SK-N-SH (cell line): ENCODE measurements at regions of chr1 and their contacts with region 1.

Region 1: GRCh38 chr1:204162231-204163074 is 3.7 kb downstream of the REN start:
- DNase-seq: peak; percentile 91
- H3K4me3 ChIP-seq: peak overlapping the region in 1 of 2 experiments; percentile 20; a peak in 1 of 4 replicates
- H3K27ac ChIP-seq: no peak overlapping the region
- H3K4me1 ChIP-seq: no peaks in the 10 kb centered on the region; a peak in 1 of 4 replicates
- H3K27me3 ChIP-seq: no peaks in the 10 kb centered on the region; the same call in 1 of the 2 replicates
- CTCF ChIP-seq: peak; percentile 98
- EP300 ChIP-seq: no peak
- RAD21 ChIP-seq: peak; percentile 99

Region 2: GRCh38 chr1:204065174-204065985 is 97.1 kb before region 1 on chr1:
- CTCF ChIA-PET with region 1: no interaction called
- POLR2A ChIA-PET with region 1: no interaction called
- DNase-seq: no peak
- H3K4me3 ChIP-seq: no peak overlapping the region
- H3K27ac ChIP-seq: no peak overlapping the region
- H3K4me1 ChIP-seq: 0 out of 4 replicates have a peak, but pooled peaks cover 0 to 5% of the 10 kb centered on the region in 2 experiments
- H3K27me3 ChIP-seq: no peaks in the 10 kb centered on the region
- CTCF ChIP-seq: no peak
- EP300 ChIP-seq: no peak
- RAD21 ChIP-seq: no peak

Region 3: GRCh38 chr1:204136814-204137213 is 25.6 kb before region 1 on chr1:
- CTCF ChIA-PET with region 1: interaction called, 24 read pairs
- POLR2A ChIA-PET with region 1: no interaction called
- DNase-seq: no peak
- H3K4me3 ChIP-seq: no peak overlapping the region
- H3K27ac ChIP-seq: no peak overlapping the region
- H3K4me1 ChIP-seq: peaks cover 3% of the 10 kb centered on the region in 2 experiments; a peak in 3 of 4 replicates
- H3K27me3 ChIP-seq: no peaks in the 10 kb centered on the region
- CTCF ChIP-seq: no peak
- EP300 ChIP-seq: no peak
- RAD21 ChIP-seq: no peak

Region 4: GRCh38 chr1:204198151-204198994 is 35.9 kb after region 1 on chr1:
- CTCF ChIA-PET with region 1: interaction called, 157 read pairs
- POLR2A ChIA-PET with region 1: no interaction called
- DNase-seq: peak; percentile 45
- H3K4me3 ChIP-seq: no peak overlapping the region
- H3K27ac ChIP-seq: no peak overlapping the region
- H3K4me1 ChIP-seq: peaks cover 2 to 26% of the 10 kb centered on the region in 2 experiments; a peak in 2 of 4 replicates
- H3K27me3 ChIP-seq: no peaks in the 10 kb centered on the region
- CTCF ChIP-seq: no peak; the same call in 1 of the 2 replicates
- EP300 ChIP-seq: 0 out of 4 replicates have a peak, but pooled peaks of 1 of the 2 experiments have one; percentile 37
- RAD21 ChIP-seq: no peak

Region 5: DNA sequence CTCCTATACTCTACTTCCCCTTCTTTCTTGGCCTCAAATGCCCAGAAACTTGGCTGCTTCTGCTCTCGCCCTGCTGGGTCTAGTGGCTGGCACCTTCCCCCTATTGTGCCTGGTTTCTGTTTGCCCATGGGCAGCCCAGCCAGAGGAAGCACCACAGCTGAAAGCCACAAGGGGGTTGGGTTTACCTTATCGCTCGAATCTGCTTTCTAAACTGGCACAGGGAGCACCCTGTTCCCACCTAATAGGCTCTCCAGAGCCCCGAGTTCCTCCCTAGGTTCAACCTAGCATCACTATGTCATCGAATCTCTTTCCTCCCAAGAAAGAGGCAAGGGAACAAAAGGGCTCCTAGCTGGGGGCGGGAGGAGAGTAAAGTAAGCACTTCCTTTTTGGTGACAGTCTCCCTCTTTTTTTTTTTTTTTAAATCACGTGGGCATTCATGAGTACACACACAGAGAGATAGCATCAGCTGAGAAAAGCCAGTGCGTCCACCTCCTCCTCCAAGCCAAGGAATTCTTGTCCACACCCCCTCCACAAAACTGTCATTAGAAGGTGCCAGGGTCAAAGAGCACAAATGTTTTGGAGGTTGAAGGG is 124.5 kb after region 1 on chr1:
- CTCF ChIA-PET with region 1: interaction called, 13 read pairs
- POLR2A ChIA-PET with region 1: interaction called, 4 read pairs
- DNase-seq: peak; percentile 51
- H3K4me3 ChIP-seq: peak overlapping the region in 1 of 2 experiments; percentile 54; a peak in 2 of 4 replicates
- H3K27ac ChIP-seq: peak overlapping the region in 1 of 2 experiments; percentile 98; a peak in 2 of 4 replicates
- H3K4me1 ChIP-seq: peaks cover 0 to 54% of the 10 kb centered on the region in 2 experiments; a peak in 2 of 4 replicates
- H3K27me3 ChIP-seq: peaks cover 21% of the 10 kb centered on the region
- CTCF ChIP-seq: no peak
- EP300 ChIP-seq: peak in 1 of 2 experiments; percentile 56; a peak in 1 of 4 replicates
- RAD21 ChIP-seq: no peak

Region 6: GRCh38 chr1:204384994-204385352 is 222.5 kb after region 1 on chr1:
- CTCF ChIA-PET with region 1: interaction called, 15 read pairs
- POLR2A ChIA-PET with region 1: no interaction called
- DNase-seq: peak; percentile 48
- H3K4me3 ChIP-seq: no peak overlapping the region
- H3K27ac ChIP-seq: no peak overlapping the region; a peak in 1 of 4 replicates
- H3K4me1 ChIP-seq: peaks cover 3 to 9% of the 10 kb centered on the region in 2 experiments; a peak in 1 of 4 replicates
- H3K27me3 ChIP-seq: peaks cover 2% of the 10 kb centered on the region
- CTCF ChIP-seq: no peak
- EP300 ChIP-seq: no peak
- RAD21 ChIP-seq: no peak

Region 7: GRCh38 chr1:204494281-204495077 is 332.0 kb after region 1 on chr1 and contains the start of gene PIK3C2B:
- CTCF ChIA-PET with region 1: interaction called, 12 read pairs
- POLR2A ChIA-PET with region 1: no interaction called
- DNase-seq: peak; percentile 97
- H3K4me3 ChIP-seq: peak within 1 kb of the TSS; percentile 72 to 79
- H3K27ac ChIP-seq: peak within 1 kb of the TSS; percentile 70 to 90
- H3K4me1 ChIP-seq: peaks cover 0 to 15% of the 10 kb centered on the region in 2 experiments; a peak in 3 of 4 replicates
- H3K27me3 ChIP-seq: no peaks in the 10 kb centered on the region
- CTCF ChIP-seq: peak; percentile 43
- EP300 ChIP-seq: no peak
- RAD21 ChIP-seq: peak; percentile 26
- polyA plus RNA-seq, gene PIK3C2B: 6.5 and 6.6 TPM in 2 replicates